ENCODE measurements at regions of chr1 and their contacts with region 1.

Region 1: DNA sequence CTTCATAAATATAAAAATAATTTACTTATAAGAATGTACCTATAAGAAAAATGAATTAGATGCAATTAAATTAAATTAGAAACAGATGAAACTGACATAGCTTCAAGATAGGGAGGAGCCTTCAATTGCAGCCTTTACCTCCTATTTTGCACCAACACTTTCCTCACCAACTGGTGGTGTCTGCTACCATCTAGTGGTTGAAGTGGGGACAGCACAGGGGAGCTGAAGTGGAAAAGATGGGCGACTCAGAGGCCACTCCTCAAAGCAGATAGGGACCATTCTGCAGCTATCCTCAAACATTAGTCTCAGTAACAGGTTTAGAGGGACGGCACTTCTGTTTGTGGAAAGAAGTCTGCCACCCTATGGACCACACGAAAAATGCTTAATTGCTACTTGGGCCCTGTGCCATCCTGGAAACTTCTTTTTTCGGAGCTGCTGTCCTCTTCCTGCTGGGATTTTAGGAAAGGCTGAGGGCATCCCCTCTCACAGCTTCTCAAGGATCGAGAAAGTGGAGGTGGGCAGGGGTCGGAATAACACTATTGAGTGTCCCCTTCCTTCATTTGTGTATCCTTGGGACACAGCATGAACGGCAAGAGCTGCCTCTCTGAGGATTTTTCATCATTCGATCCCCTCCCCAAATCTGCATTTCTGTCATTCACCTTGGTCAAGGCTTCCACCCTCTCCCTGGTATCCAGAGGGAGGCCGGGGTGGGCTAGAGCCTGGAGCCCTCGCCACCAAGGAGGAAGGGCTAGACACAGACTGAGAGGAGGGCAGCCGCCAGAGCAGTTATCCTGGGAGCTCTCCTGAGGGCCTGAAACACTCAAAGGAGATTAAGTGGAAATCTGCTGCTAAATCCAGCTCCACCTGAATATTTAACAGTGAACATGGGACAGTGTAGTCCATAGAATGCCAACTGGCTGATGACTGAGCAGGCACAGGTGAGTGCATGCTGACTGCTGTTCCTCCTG is 9.6 kb downstream of the PROK1 start:
- H3K4me3 ChIP-seq: no peak overlapping the region
- H3K27ac ChIP-seq: no peak overlapping the region
- H3K4me1 ChIP-seq: no peaks in the 10 kb centered on the region
- CTCF ChIP-seq: peak; percentile 81

Region 2: DNA sequence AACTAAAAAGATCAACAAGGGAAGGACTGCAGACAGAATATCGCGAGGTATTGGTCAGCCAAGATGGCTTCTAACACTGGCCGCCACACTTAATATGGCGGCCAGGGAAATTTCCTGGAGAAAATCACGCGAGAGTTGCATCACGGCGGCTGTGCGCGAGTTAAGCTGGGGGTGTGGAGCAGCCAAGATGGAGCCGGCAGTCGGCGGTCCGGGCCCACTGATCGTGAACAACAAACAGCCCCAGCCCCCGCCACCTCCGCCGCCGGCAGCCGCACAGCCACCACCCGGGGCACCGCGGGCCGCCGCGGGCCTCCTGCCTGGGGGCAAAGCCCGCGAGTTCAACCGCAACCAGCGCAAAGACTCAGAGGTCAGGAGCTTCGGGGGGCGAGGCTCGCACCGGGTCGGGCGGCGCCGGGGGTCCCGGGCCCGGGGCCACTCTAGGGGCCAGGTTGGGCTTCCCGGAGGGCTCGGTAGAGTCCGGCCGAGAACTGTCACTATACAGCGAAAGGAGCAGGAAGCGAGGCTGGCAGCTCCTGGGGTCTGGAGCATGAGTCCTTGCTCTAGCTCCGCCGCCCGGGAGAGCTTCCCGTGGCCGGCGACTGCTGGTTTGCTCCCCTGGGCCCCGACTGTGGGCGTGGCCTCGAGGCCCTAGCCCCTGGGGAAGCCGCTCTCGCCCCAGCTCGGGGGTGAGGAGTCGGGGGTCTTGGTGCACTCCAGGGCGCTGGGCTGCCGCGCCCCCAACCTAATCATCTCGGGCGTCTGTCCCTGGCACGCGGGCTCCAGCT is 425.9 kb before region 1 on chr1 and contains the start of gene STRIP1:
- CTCF ChIA-PET with region 1: interaction called, 11 read pairs
- POLR2A ChIA-PET with region 1: no interaction called
- H3K4me3 ChIP-seq: peak within 1 kb of the TSS; percentile 80
- H3K27ac ChIP-seq: peak within 1 kb of the TSS; percentile 76
- H3K4me1 ChIP-seq: peaks cover 4% of the 10 kb centered on the region; the same call in 1 of the 2 replicates
- CTCF ChIP-seq: no peak

Region 3: GRCh38 chr1:110196917-110197765 is 263.4 kb before region 1 on chr1:
- CTCF ChIA-PET with region 1: interaction called, 357 read pairs
- POLR2A ChIA-PET with region 1: no interaction called
- H3K4me3 ChIP-seq: no peak overlapping the region
- H3K27ac ChIP-seq: no peak overlapping the region
- H3K4me1 ChIP-seq: no peaks in the 10 kb centered on the region
- CTCF ChIP-seq: peak; percentile 63; the same call in 1 of the 2 replicates

Region 4: GRCh38 chr1:110319332-110320152 is 141.0 kb before region 1 on chr1:
- CTCF ChIA-PET with region 1: interaction called, 19 read pairs
- POLR2A ChIA-PET with region 1: no interaction called
- H3K4me3 ChIP-seq: no peak overlapping the region
- H3K27ac ChIP-seq: no peak overlapping the region
- H3K4me1 ChIP-seq: no peaks in the 10 kb centered on the region
- CTCF ChIP-seq: no peak

Region 5: DNA sequence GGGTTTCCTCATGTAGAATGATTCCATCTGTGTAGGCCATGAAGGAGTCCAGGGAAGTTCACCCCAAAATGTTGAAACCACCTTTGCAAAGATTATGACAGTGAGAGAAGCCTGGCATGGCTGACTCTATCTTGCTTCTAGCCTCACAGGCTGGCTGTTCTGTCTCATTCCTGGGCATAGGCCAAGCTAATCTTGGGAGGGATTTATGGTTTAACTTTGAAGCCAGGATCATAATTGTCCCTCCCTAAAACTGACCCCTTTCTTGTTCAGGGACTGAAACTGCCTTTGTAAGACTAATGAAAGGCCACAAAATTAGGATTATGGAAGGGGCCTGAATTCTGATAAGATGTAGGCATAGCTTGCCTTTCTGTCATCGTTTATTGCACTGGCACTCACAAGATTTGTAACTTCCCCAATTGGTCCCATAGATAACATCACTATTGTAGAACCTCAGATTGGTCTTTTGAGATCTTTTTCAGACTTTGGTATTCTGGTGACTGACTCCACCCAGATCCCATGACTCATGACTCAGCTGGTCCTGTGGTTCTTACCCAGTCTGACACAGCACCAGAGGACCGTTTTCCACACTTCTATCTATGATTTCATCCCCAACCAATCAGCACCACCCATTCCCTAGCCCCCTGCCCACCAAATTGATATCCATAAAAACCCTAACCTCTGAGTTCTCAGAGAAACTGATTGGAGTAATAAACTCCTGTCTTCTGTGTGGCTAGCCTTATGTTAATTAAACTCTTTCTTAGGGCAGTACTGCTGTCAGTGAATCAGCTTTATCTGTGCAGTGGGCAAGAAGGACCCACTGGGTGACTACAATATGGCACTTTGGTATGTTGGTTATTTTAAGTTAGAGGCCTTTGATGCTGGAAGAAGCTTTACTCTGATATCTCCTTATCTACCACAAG is 39.4 kb before region 1 on chr1:
- CTCF ChIA-PET with region 1: interaction called, 305 read pairs
- POLR2A ChIA-PET with region 1: no interaction called
- H3K4me3 ChIP-seq: no peak overlapping the region
- H3K27ac ChIP-seq: no peak overlapping the region
- H3K4me1 ChIP-seq: no peaks in the 10 kb centered on the region
- CTCF ChIP-seq: no peak

Region 6: GRCh38 chr1:110449661-110450651 is 10.6 kb before region 1 on chr1:
- CTCF ChIA-PET with region 1: interaction called, 13 read pairs
- POLR2A ChIA-PET with region 1: no interaction called
- H3K4me3 ChIP-seq: no peak overlapping the region
- H3K27ac ChIP-seq: no peak overlapping the region
- H3K4me1 ChIP-seq: no peaks in the 10 kb centered on the region
- CTCF ChIP-seq: no peak

Region 7: DNA sequence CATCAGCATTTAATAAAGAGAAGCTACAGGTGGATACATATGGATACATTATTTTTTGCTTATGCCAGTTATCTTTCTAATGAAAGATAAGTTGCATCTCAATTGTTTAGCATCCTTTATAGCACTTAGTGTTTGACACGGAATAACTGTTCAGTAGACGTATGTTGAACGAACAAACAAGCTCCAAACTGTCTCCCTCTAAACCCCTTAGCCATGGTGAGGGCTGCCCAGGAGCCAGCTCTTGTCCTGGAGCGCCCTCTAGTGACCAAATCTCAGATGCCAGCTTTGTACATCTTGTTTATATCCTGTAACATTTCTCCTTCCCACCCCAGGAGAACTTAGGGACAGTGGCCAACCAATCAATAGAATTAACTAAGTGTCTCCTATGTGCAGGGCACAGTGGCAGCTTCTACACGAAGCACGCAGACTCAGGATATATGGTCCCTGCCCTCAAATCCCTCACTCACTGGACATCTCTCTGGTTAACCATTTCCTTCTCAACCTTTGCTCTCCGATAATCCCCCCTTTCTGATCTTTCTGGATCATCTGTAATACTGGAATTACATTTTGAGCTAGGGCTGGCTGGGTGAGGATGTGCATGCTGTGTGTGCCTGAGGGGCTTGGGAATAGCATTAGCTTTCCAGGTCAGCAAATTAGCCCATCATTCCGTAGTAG is 35.5 kb after region 1 on chr1:
- CTCF ChIA-PET with region 1: interaction called, 215 read pairs
- POLR2A ChIA-PET with region 1: no interaction called
- H3K4me3 ChIP-seq: no peak overlapping the region
- H3K27ac ChIP-seq: no peak overlapping the region
- H3K4me1 ChIP-seq: no peaks in the 10 kb centered on the region
- CTCF ChIP-seq: peak; percentile 87

Measured in HEK293 (cell line).